ENCODE measurements at regions of chr4 and their contacts with region 1.

Region 1: GRCh38 chr4:139589336-139590018 is 33.5 kb upstream of the SETD7 start:
- DNase-seq: no peak
- H3K4me3 ChIP-seq: no peak overlapping the region
- H3K27ac ChIP-seq: no peak overlapping the region
- H3K4me1 ChIP-seq: no peaks in the 10 kb centered on the region
- H3K27me3 ChIP-seq: no peaks in the 10 kb centered on the region
- CTCF ChIP-seq: no peak

Region 2: GRCh38 chr4:139628184-139629012 is 38.9 kb after region 1 on chr4:
- CTCF ChIA-PET with region 1: no interaction called
- dilution Hi-C with region 1: loop called (anchors 5 kb)
- in situ Hi-C with region 1: no loop called
- intact Hi-C with region 1: no loop called
- DNase-seq: no peak
- H3K4me3 ChIP-seq: no peak overlapping the region
- H3K27ac ChIP-seq: no peak overlapping the region
- H3K4me1 ChIP-seq: no peaks in the 10 kb centered on the region
- H3K27me3 ChIP-seq: no peaks in the 10 kb centered on the region
- CTCF ChIP-seq: no peak